Natural killer cell (primary cell): ENCODE measurements at regions of chr4 and their contacts with region 1.

Region 1: DNA sequence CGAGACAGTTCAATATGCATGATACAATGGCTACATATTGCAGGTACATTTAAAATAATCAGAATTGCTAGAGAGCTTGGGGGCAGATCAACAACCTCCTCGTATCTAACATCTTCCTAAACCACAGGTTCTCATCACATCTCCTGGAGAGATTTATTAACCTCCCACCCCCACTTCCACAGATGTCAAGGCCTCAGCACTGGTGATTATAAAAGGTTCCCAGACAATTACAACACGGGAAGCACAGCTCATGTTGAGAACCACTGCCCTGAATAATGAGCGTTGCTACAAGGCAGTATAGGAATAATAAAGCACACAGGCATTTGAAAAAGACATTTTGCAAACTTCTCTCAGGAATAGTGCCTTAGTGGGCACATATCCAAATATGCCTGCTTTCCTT is 42.8 kb downstream of the ELOVL6 start:
- DNase-seq: no peak
- ATAC-seq: no peak
- H3K4me3 ChIP-seq: no peak overlapping the region
- H3K4me3 Mint-ChIP-seq: peak overlapping the region; percentile 50
- H3K27ac ChIP-seq: no peak overlapping the region
- H3K27ac Mint-ChIP-seq: peak overlapping the region; percentile 67 to 70
- H3K4me1 ChIP-seq: peaks cover 6% of the 10 kb centered on the region
- H3K4me1 Mint-ChIP-seq: peaks cover 34 to 38% of the 10 kb centered on the region in 2 donors
- H3K27me3 ChIP-seq: no peaks in the 10 kb centered on the region
- H3K27me3 Mint-ChIP-seq: no peaks in the 10 kb centered on the region
- CTCF ChIP-seq: no peak

Region 2: GRCh38 chr4:108662629-108663028 is 1493.0 kb before region 1 on chr4:
- intact Hi-C with region 1: no loop called
- DNase-seq: no peak
- ATAC-seq: no peak
- H3K4me3 ChIP-seq: no peak overlapping the region
- H3K4me3 Mint-ChIP-seq: no peak overlapping the region
- H3K27ac ChIP-seq: no peak overlapping the region
- H3K27ac Mint-ChIP-seq: no peak overlapping the region
- H3K4me1 ChIP-seq: no peaks in the 10 kb centered on the region
- H3K4me1 Mint-ChIP-seq: peaks cover 5 to 10% of the 10 kb centered on the region in 2 donors
- H3K27me3 ChIP-seq: no peaks in the 10 kb centered on the region
- H3K27me3 Mint-ChIP-seq: no peaks in the 10 kb centered on the region
- CTCF ChIP-seq: no peak

Region 3: DNA sequence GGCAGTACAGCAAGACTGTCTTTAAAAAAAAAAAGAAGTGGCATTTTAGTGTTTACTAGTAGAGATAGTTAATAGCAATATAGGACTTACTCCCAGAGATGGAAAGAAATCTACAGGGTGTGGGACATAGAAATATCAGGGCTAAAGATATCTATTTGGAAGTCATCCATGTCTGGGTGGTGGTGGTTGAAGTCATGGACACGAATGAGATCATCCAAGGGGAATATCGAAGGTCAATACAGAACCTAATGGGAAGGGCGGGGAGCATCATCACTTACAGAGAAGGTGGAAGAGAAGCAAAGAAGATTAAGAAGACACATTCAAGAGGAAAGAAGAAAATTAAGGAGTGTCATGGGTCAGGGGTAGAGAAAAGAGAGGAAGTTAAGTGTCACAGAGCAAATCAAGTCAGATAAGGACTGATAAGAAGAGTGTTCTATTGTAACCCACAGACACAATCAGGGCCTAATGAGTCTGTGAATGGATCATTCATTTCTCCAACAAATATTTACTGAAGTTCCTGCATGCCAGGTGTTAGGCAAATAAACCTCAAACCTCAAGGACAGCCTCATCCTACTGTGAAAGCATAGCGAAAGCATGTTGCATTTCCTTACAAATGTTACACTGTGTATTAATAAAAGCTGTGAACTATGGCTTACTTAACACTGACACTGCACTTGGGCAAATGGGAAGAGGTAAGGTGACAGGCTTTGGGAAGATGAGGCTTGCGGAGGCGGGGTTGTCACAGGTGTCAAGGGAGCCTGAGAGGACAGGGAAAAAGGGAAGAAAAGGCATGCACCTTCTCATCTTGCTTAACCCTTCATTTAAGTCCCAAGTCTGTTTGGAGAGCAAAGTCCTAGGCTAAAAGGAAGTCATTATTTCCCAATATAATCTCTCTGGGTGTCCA is 22.6 kb before region 1 on chr4:
- intact Hi-C with region 1: no loop called
- DNase-seq: no peak
- ATAC-seq: no peak
- H3K4me3 ChIP-seq: no peak overlapping the region
- H3K4me3 Mint-ChIP-seq: no peak overlapping the region
- H3K27ac ChIP-seq: no peak overlapping the region
- H3K27ac Mint-ChIP-seq: peak overlapping the region in 1 of 2 donors; percentile 13
- H3K4me1 ChIP-seq: no peaks in the 10 kb centered on the region
- H3K4me1 Mint-ChIP-seq: peaks cover 34 to 43% of the 10 kb centered on the region in 2 donors
- H3K27me3 ChIP-seq: no peaks in the 10 kb centered on the region
- H3K27me3 Mint-ChIP-seq: no peaks in the 10 kb centered on the region
- CTCF ChIP-seq: no peak

Region 4: GRCh38 chr4:110193822-110194761 is 38.4 kb after region 1 on chr4:
- intact Hi-C with region 1: loop called (anchors 2 kb)
- DNase-seq: peak; percentile 62 to 89
- ATAC-seq: peak; percentile 72 to 83 (median 75)
- H3K4me3 ChIP-seq: no peak overlapping the region
- H3K4me3 Mint-ChIP-seq: peak overlapping the region; percentile 57
- H3K27ac ChIP-seq: peak overlapping the region; percentile 72
- H3K27ac Mint-ChIP-seq: peak overlapping the region; percentile 80 to 91
- H3K4me1 ChIP-seq: peaks cover 19% of the 10 kb centered on the region
- H3K4me1 Mint-ChIP-seq: peaks cover 36 to 47% of the 10 kb centered on the region in 2 donors
- H3K27me3 ChIP-seq: no peaks in the 10 kb centered on the region
- H3K27me3 Mint-ChIP-seq: no peaks in the 10 kb centered on the region
- CTCF ChIP-seq: no peak